ENCODE measurements at regions of chr12 and their contacts with region 1.

Region 1: GRCh38 chr12:54251667-54252284 is 28.1 kb downstream of the CBX5 start:
- DNase-seq: no peak
- ATAC-seq: peak; percentile 74
- H3K4me3 Mint-ChIP-seq: no peak overlapping the region
- H3K27ac Mint-ChIP-seq: no peak overlapping the region
- H3K4me1 Mint-ChIP-seq: peaks cover 7% of the 10 kb centered on the region
- H3K27me3 Mint-ChIP-seq: no peaks in the 10 kb centered on the region
- CTCF ChIP-seq: peak; percentile 30

Region 2: DNA sequence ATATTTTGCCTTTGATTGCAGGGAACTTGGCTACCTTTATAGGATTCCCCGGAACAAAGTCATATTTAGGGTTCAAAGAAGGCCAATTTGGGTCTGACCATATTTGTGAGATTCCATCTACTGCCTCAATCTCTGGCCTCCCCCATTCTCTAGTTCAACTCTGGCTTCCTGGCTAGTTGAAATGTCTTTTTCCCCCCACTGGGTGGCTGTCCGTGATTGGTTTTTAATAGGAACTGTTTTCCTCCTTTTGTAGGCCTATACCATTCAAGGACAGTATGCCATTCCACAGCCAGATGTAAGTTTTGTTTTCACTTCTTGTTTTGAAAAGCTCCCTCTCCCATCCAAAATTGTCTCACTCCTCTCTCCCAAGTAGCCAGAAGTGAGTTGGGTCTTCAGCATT is 786.1 kb before region 1 on chr12:
- CTCF ChIA-PET with region 1: no interaction called
- POLR2A ChIA-PET with region 1: interaction called, 15 read pairs
- intact Hi-C with region 1: no loop called
- DNase-seq: no peak
- ATAC-seq: no peak
- H3K4me3 Mint-ChIP-seq: no peak overlapping the region
- H3K27ac Mint-ChIP-seq: no peak overlapping the region
- H3K4me1 Mint-ChIP-seq: peaks cover 12% of the 10 kb centered on the region
- H3K27me3 Mint-ChIP-seq: no peaks in the 10 kb centered on the region
- CTCF ChIP-seq: no peak

Region 3: GRCh38 chr12:54337280-54337842 is 85.6 kb after region 1 on chr12:
- CTCF ChIA-PET with region 1: interaction called, 16 read pairs
- POLR2A ChIA-PET with region 1: interaction called, 3 read pairs
- intact Hi-C with region 1: no loop called
- DNase-seq: no peak
- ATAC-seq: no peak
- H3K4me3 Mint-ChIP-seq: no peak overlapping the region
- H3K27ac Mint-ChIP-seq: no peak overlapping the region
- H3K4me1 Mint-ChIP-seq: peaks cover 9% of the 10 kb centered on the region
- H3K27me3 Mint-ChIP-seq: no peaks in the 10 kb centered on the region
- CTCF ChIP-seq: no peak

Region 4: DNA sequence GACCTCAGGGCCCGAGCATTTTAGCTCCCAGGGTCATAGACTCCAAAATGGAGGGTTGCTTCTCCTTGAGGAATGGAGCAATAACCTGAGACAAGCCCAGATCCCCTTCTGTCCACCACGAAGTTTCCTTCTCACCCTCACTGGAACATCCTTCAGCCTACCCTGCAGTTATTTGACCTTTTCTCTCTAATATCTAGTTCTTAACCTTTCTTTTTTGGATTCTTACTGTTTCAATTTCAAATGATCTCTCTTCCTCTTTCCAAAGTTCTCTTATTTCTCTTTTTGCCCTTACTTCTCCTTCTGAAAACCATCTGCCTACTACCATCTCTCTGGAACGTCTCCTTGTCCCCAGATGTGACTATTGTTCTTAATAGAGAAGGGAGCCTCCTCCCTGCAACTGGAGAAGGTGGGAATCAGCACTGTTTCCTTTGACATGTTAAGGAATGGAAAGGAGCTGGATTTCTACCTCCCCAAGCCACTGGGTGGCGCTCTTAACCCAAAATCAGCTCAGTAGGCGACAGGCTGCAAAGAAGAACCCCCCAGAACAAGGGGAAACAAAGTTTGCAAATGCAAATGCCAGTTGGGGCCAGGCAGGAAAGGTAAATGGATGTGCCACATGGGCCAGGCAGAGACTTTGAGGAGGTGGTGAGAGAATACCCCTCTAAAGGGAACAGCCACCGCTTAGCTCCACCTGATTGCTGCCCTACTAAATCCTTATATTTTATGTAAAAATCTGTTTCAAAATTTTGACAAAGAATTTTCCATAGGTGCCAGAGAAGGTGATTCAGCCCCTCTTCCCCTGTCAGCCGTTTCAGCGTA is 275.2 kb after region 1 on chr12:
- CTCF ChIA-PET with region 1: no interaction called
- POLR2A ChIA-PET with region 1: no interaction called
- intact Hi-C with region 1: no loop called
- DNase-seq: no peak
- ATAC-seq: no peak
- H3K4me3 Mint-ChIP-seq: no peak overlapping the region
- H3K27ac Mint-ChIP-seq: no peak overlapping the region
- H3K4me1 Mint-ChIP-seq: no peaks in the 10 kb centered on the region
- H3K27me3 Mint-ChIP-seq: no peaks in the 10 kb centered on the region
- CTCF ChIP-seq: no peak